ENCODE measurements at regions of chr4 and their contacts with region 1.

Region 1: DNA sequence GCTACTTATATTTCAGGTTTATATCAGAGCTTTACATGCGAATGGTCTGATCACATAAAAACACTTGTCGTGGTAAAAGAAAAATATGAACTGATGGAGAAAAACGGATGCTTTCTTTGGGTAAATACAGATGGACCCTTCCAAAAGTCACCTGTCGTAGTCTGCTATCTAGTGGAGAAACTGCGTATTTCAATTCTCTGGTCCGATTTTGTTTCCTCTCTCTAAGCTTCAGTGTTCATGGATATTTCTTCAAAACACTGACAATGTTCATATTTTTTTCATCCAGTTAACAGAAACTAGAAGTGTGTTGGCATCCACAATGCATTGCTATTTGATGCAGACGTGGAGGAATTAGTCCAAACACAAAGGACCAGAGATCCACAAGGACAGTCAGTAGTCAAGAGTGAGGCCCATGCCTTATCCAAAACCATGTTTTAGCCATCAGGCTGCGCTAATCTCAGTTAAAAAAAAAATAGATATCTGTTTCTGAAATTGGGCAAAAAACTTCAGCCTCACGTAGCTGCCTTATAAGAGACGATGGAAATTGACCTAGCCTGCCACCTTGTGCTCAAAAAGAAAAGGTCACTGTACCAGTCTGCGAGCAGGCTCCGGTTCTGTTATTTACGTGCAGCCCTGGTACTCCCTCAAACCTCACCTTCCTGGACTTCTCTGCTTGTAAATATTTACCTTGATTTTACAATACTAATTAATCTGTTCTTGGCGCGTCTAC is 16.0 kb downstream of the MEPE start:
- DNase-seq: peak; percentile 71
- H3K4me3 ChIP-seq: no peak overlapping the region
- H3K27ac ChIP-seq: no peak overlapping the region
- H3K27me3 ChIP-seq: no peaks in the 10 kb centered on the region
- CTCF ChIP-seq: peak; percentile 77

Region 2: GRCh38 chr4:87543835-87544461 is 304.8 kb before region 1 on chr4:
- in situ Hi-C with region 1: loop called (anchors 25 kb)
- DNase-seq: peak; percentile 59
- H3K4me3 ChIP-seq: no peak overlapping the region
- H3K27ac ChIP-seq: no peak overlapping the region
- H3K27me3 ChIP-seq: no peaks in the 10 kb centered on the region
- CTCF ChIP-seq: peak; percentile 77

Region 3: GRCh38 chr4:87679449-87680169 is 169.2 kb before region 1 on chr4:
- in situ Hi-C with region 1: loop called (anchors 10 kb)
- DNase-seq: peak; percentile 35
- H3K4me3 ChIP-seq: no peak overlapping the region
- H3K27ac ChIP-seq: no peak overlapping the region
- H3K27me3 ChIP-seq: no peaks in the 10 kb centered on the region
- CTCF ChIP-seq: peak; percentile 75

Region 4: DNA sequence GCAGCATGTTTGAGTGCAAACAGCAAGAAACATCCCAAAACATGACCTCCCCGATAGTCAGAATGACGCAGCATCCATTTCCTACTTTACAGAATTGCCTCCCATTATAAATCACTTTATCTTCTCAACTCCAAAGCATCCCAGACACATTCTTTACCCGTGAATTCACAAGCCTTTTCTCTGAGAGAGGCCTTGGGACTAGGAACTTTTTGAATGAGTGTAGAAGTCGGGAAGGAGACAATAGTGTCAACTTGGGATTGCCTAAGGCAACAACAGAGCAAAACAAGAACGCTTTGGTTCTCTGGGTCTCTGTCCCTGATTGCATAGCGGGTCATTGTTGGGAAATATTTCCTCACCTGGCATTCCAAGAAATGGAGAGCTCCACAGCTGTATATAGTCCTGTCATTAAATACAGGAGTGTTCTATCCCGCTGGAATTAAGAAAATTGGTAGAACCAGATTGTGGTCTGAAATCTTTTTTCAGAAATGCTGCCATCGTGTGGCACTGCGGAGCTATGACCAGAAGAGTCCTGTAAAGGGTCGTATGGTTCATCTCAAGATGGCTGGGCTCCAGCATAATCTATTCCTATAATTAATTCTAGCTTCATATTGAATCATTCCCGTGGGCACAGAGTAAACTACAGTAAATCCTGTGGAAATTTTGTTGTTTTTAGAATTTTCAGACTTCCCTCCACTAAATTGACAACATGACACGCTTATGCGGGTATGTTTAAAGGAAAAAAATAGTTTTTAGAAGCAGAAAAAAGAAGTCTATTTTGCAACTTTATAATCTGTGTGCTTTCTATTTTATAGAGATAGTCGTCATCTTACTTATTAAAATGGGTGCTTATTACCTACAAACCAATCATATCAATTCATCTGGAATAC is 124.7 kb after region 1 on chr4:
- in situ Hi-C with region 1: loop called (anchors 10 kb)
- DNase-seq: peak; percentile 76
- H3K4me3 ChIP-seq: peak overlapping the region; percentile 16
- H3K27ac ChIP-seq: peak overlapping the region; percentile 75
- H3K27me3 ChIP-seq: no peaks in the 10 kb centered on the region
- CTCF ChIP-seq: peak; percentile 85